Heart right ventricle (tissue), 16 donors: ENCODE measurements at regions of chr20 and their contacts with region 1.

Region 1: GRCh38 chr20:38315290-38315966 is 11.5 kb downstream of the BPI start:
- DNase-seq: no peak
- ATAC-seq: peak in 3 of 8 donors; percentile 30 to 61 (median 50)
- H3K4me3 ChIP-seq: no peak overlapping the region
- H3K27ac ChIP-seq: no peak overlapping the region
- H3K4me1 ChIP-seq: no peaks in the 10 kb centered on the region
- H3K27me3 ChIP-seq: peaks cover 0 to 19% (median 3%) of the 10 kb centered on the region in 7 donors
- CTCF ChIP-seq: peak in 3 of 9 donors; percentile 19 to 25 (median 20)

Region 2: DNA sequence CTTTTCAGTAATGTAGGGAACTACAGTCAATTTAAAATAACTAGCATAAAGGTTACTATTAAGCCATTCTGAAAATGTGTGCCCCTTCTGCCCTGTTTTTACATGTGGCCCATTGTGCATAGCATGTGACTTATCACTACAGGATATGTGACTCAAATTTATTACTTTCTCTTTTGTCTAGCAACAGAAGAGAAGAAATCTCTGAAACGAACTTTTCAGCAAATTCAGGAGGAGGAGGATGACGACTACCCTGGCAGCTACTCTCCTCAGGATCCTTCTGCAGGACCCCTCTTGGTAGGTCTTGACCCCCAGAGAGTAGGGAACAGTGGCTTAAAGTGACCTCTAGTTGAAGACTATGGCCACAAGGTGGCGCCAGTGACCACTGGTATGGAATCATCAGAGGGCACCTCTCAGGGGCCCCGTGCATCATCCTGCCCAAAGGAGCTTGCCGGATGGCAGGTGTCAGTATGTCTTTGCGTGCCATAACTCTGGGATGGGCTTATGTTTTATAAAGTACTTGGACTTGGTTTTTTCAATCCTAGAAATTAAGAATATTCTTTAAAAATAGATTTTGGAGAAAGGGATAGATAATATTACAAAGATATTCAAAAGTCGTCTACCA is 258.0 kb before region 1 on chr20:
- intact Hi-C with region 1: loop called in 3 of 10 experiments (anchors 5 kb)
- DNase-seq: peak; percentile 83 to 86
- ATAC-seq: peak; percentile 87 to 95 (median 92)
- H3K4me3 ChIP-seq: no peak overlapping the region
- H3K27ac ChIP-seq: peak overlapping the region in 3 of 10 donors; percentile 10 to 60 (median 42)
- H3K4me1 ChIP-seq: peaks cover 0 to 39% (median 13%) of the 10 kb centered on the region in 9 donors
- H3K27me3 ChIP-seq: no peaks in the 10 kb centered on the region
- CTCF ChIP-seq: peak; percentile 82 to 98 (median 91)

Region 3: GRCh38 chr20:38229376-38230252 is 85.8 kb before region 1 on chr20:
- intact Hi-C with region 1: loop called in 4 of 10 experiments (anchors 5 to 10 kb)
- DNase-seq: no peak
- ATAC-seq: peak in 5 of 8 donors; percentile 2 to 33 (median 17)
- H3K4me3 ChIP-seq: no peak overlapping the region
- H3K27ac ChIP-seq: no peak overlapping the region
- H3K4me1 ChIP-seq: peaks cover 0 to 14% (median 9%) of the 10 kb centered on the region in 9 donors
- H3K27me3 ChIP-seq: peaks cover 0 to 5% (median 0%) of the 10 kb centered on the region in 7 donors
- CTCF ChIP-seq: peak; percentile 16 to 65 (median 51)

Region 4: GRCh38 chr20:38239441-38239840 is 76.0 kb before region 1 on chr20:
- intact Hi-C with region 1: loop called in 2 of 10 experiments (anchors 5 to 10 kb)
- DNase-seq: no peak
- ATAC-seq: no peak
- H3K4me3 ChIP-seq: no peak overlapping the region
- H3K27ac ChIP-seq: no peak overlapping the region
- H3K4me1 ChIP-seq: peaks cover 0 to 3% (median 0%) of the 10 kb centered on the region in 9 donors
- H3K27me3 ChIP-seq: peaks cover 0 to 6% (median 0%) of the 10 kb centered on the region in 7 donors
- CTCF ChIP-seq: no peak